Caco-2 (cell line): ENCODE measurements at regions of chr12 and their contacts with region 1.

Region 1: DNA sequence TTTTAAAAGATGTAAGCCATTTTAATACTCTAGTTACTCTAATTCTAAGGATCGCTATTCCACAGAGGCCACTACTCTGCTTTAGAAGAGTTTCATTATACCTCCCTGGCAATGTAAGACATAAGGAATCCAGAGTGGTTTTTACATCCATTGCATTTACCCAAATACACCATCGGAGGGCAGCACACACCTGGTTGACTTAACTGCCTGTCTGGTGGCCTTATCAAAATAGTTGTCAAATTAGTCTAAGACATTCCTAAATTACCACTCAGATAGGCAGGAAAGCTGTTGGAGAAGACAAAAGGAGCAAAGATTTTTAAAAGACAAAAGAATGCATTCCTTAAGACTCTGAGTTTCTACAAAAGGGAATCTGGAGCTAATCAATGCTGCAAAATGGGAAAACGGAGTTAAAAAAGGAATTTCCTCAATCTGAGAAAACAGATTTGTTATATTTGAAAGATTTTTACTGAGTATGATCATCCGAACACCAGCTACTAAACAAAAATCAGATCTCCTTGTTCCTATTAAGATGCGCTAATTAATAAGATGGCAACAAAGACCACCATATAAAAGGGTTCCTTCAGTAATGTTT is 33.8 kb upstream of the FGD4 start:
- DNase-seq: peak; percentile 75 to 79
- H3K4me3 ChIP-seq: no peak overlapping the region
- H3K4me3 Mint-ChIP-seq: no peak overlapping the region
- H3K27ac Mint-ChIP-seq: no peak overlapping the region
- H3K4me1 ChIP-seq: peaks cover 13% of the 10 kb centered on the region
- H3K4me1 Mint-ChIP-seq: peaks cover 15% of the 10 kb centered on the region
- H3K27me3 ChIP-seq: no peaks in the 10 kb centered on the region
- H3K27me3 Mint-ChIP-seq: no peaks in the 10 kb centered on the region
- CTCF ChIP-seq: peak; percentile 82 to 98

Region 2: DNA sequence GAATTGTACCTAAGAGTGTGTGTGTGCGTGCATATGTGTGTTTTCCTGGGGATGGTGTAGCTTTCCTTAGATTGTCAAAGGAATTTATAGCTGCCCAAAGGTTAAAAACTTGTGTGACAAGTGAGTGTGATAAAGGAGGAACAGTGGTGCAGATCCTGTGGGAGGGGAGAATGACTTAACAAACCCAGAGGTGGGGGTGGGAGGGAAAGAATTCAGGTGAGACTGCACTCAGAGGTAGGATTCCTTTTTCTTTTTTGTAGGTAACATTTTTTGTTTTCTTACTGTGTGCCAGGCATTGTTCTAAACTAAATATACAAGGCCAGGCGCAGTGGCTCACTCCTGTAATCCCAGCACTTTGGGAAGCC is 994.3 kb before region 1 on chr12:
- CTCF ChIA-PET with region 1: no interaction called
- POLR2A ChIA-PET with region 1: no interaction called
- intact Hi-C with region 1: no loop called
- DNase-seq: peak; percentile 94 to 97
- H3K4me3 ChIP-seq: peak overlapping the region; percentile 10; the same call in 1 of the 2 replicates
- H3K4me3 Mint-ChIP-seq: peak overlapping the region; percentile 70
- H3K27ac Mint-ChIP-seq: peak overlapping the region; percentile 100
- H3K4me1 ChIP-seq: peaks cover 26% of the 10 kb centered on the region
- H3K4me1 Mint-ChIP-seq: peaks cover 39% of the 10 kb centered on the region
- H3K27me3 ChIP-seq: no peaks in the 10 kb centered on the region
- H3K27me3 Mint-ChIP-seq: no peaks in the 10 kb centered on the region
- CTCF ChIP-seq: no peak

Region 3: DNA sequence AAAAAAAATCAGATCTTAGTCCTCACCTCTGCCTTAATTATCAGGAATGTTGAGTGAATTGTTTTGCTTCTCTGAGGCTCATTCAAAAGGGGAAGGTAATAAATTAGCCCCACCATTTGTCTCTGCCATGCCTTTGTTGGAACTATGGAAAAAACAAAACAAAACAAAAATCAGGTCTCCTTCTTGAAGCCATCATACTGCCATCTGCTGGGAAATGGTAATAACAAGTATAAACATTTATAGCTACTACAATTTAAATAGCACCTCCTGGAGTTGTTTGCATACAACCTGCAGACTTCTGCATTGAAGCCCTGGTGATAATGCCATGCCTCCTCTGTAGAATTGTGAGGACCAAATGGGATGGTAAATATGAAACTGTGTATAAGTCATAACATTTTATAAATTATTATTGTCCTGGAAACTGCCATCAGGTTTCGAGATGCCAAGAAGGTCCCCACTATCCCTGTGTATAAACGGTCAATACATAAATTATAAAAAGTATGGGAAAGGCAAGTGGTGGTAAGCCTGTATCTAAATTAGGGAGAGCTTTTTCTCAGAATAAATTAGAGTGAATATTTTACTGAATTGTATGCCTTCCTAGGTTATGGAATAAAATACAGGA is 53.4 kb before region 1 on chr12:
- CTCF ChIA-PET with region 1: no interaction called
- POLR2A ChIA-PET with region 1: no interaction called
- intact Hi-C with region 1: no loop called
- DNase-seq: peak in 1 of 2 experiments; percentile 58
- H3K4me3 ChIP-seq: no peak overlapping the region
- H3K4me3 Mint-ChIP-seq: peak overlapping the region; percentile 1
- H3K27ac Mint-ChIP-seq: peak overlapping the region; percentile 42
- H3K4me1 ChIP-seq: peaks cover 35% of the 10 kb centered on the region
- H3K4me1 Mint-ChIP-seq: peaks cover 41% of the 10 kb centered on the region
- H3K27me3 ChIP-seq: no peaks in the 10 kb centered on the region
- H3K27me3 Mint-ChIP-seq: no peaks in the 10 kb centered on the region
- CTCF ChIP-seq: peak; percentile 54 to 61

Region 4: GRCh38 chr12:32399337-32400113 is 34.0 kb after region 1 on chr12 and contains the start of gene FGD4:
- CTCF ChIA-PET with region 1: interaction called, 5 read pairs
- POLR2A ChIA-PET with region 1: no interaction called
- intact Hi-C with region 1: loop called (anchors 1 kb)
- DNase-seq: peak; percentile 96 to 97
- H3K4me3 ChIP-seq: peak within 1 kb of the TSS; percentile 93
- H3K4me3 Mint-ChIP-seq: peak within 1 kb of the TSS; percentile 86
- H3K27ac Mint-ChIP-seq: peak within 1 kb of the TSS; percentile 87
- H3K4me1 ChIP-seq: peaks cover 13% of the 10 kb centered on the region
- H3K4me1 Mint-ChIP-seq: peaks cover 14% of the 10 kb centered on the region
- H3K27me3 ChIP-seq: no peaks in the 10 kb centered on the region
- H3K27me3 Mint-ChIP-seq: no peaks in the 10 kb centered on the region
- CTCF ChIP-seq: peak; percentile 68 to 86
- total RNA-seq, gene FGD4: 31.6 and 34.3 TPM in 2 replicates

Region 5: DNA sequence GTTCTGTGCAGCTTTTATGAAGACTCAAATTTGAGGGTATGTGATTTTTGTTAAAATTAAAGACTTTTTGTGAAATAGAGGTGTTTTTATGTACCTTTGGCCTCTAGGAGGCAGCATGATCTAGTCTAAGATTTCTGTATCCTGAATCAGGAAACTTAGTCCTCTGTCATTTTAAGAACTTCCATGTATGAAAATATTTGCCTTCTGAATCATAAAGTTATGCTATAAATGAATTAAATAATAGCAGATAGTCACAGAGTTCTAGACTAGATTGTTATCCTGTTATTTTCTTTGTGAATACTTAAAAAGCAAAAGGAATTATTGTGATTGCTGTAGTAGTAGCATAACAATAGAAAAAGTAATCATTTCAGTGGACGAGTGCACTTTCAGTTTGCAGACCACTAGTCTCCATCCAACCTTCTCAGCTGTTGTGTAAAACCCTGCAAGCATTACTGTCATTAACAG is 90.1 kb after region 1 on chr12:
- CTCF ChIA-PET with region 1: no interaction called
- POLR2A ChIA-PET with region 1: no interaction called
- intact Hi-C with region 1: loop called (anchors 1 kb)
- DNase-seq: peak in 1 of 2 experiments; percentile 69
- H3K4me3 ChIP-seq: no peak overlapping the region
- H3K4me3 Mint-ChIP-seq: no peak overlapping the region
- H3K27ac Mint-ChIP-seq: peak overlapping the region; percentile 74
- H3K4me1 ChIP-seq: peaks cover 48% of the 10 kb centered on the region
- H3K4me1 Mint-ChIP-seq: peaks cover 54% of the 10 kb centered on the region
- H3K27me3 ChIP-seq: no peaks in the 10 kb centered on the region
- H3K27me3 Mint-ChIP-seq: no peaks in the 10 kb centered on the region
- CTCF ChIP-seq: peak; percentile 68 to 82

Region 6: DNA sequence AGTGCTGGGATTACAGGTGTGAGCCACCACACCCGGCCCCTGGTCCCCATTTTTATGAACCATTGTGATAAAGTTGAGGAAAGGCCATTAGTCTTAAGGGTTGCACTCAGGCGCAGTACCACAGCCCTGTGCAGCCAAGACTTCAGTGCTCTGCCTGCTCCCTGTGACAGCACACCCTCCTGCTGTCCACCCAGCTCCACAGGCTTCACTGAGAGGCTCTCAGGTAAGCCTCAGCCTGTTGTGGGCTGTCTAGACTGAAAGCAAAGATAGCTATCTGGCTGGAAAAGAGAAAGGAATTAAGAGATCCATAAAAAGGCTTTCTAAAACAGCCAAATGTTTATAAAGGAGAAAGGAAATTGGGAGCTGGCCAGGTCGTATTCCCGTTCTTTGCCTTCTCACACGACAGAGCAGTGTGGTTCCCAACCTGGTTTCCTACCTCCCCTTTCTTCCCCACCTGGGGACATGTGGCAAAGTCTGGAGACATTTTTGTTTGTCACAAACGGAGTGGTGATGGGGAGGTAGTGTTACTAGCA is 294.4 kb after region 1 on chr12:
- CTCF ChIA-PET with region 1: interaction called, 3 read pairs
- POLR2A ChIA-PET with region 1: no interaction called
- intact Hi-C with region 1: loop called (anchors 1 kb)
- DNase-seq: peak in 1 of 2 experiments; percentile 27
- H3K4me3 ChIP-seq: no peak overlapping the region
- H3K4me3 Mint-ChIP-seq: no peak overlapping the region
- H3K27ac Mint-ChIP-seq: no peak overlapping the region
- H3K4me1 ChIP-seq: no peaks in the 10 kb centered on the region
- H3K4me1 Mint-ChIP-seq: no peaks in the 10 kb centered on the region
- H3K27me3 ChIP-seq: no peaks in the 10 kb centered on the region
- H3K27me3 Mint-ChIP-seq: no peaks in the 10 kb centered on the region
- CTCF ChIP-seq: no peak

Region 7: GRCh38 chr12:32718926-32719325 is 353.4 kb after region 1 on chr12:
- CTCF ChIA-PET with region 1: no interaction called
- POLR2A ChIA-PET with region 1: no interaction called
- intact Hi-C with region 1: loop called (anchors 2 kb)
- DNase-seq: no peak
- H3K4me3 ChIP-seq: no peak overlapping the region
- H3K4me3 Mint-ChIP-seq: no peak overlapping the region
- H3K27ac Mint-ChIP-seq: no peak overlapping the region
- H3K4me1 ChIP-seq: no peaks in the 10 kb centered on the region
- H3K4me1 Mint-ChIP-seq: no peaks in the 10 kb centered on the region
- H3K27me3 ChIP-seq: no peaks in the 10 kb centered on the region
- H3K27me3 Mint-ChIP-seq: no peaks in the 10 kb centered on the region
- CTCF ChIP-seq: no peak